Head of caudate nucleus (tissue), 42 donors: ENCODE measurements at regions of chr7 and their contacts with region 1.

Region 1: DNA sequence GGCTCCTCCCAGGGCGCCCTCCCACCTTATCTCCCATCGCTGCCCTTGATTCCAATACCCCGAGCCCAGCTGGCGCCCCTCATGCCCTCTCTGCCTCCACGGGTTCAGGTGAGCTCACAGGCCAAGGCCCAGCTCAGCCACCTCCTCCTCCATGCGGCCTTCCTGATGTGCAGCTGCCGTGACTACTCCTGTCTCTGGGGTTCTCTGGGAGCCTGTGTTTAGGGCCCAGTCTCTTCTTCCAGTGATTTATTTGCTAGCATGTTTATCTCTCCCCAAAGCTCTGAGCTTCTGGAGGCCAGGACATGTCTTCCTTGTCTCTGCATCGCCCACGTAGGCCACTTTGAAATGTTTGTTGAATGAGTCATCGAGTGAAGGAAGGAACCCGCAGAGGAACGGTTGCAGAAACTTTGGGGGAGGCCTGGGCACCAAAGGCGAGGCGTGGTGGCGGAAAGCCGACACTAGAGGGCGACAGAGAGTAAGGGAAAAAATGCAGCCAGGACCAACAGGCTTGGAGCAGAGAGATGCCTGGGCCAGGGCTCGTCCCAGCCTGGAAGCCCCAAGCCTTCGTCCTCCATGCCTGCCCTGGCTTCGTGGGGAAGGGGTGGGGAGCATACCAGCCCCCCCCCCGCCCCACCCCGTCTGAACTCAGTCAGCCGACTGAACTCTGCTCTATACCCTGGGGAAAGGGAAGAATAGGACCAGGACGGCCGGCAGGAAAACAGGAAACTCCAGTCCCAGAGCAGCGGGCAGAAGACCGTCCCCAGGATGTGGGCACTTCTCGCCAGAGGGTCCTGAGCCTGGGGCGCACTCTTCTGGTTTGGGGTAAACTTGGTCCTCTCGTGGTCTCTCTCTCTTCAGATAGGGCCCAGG is 10.9 kb upstream of the HSPB1 start:
- DNase-seq: peak; percentile 75 to 97 (median 93)

Region 2: GRCh38 chr7:75599244-75599781 is 692.3 kb before region 1 on chr7:
- intact Hi-C with region 1: no loop called
- DNase-seq: peak; percentile 87 to 99 (median 95)

Region 3: GRCh38 chr7:76359111-76359978 is 67.8 kb after region 1 on chr7:
- intact Hi-C with region 1: loop called (anchors 2 kb)
- DNase-seq: peak; percentile 95 to 100 (median 99)